CD4-positive, alpha-beta memory T cell (primary cell): ENCODE measurements at regions of chr5 and their contacts with region 1.

Region 1: GRCh38 chr5:76402886-76403765 is at the start of gene IQGAP2:
- DNase-seq: peak; percentile 91 to 96 (median 94)
- H3K4me3 ChIP-seq: peak within 1 kb of the TSS; percentile 68 to 82
- H3K4me3 Mint-ChIP-seq: peak within 1 kb of the TSS; percentile 95 to 98 (median 97)
- H3K27ac ChIP-seq: peak within 1 kb of the TSS; percentile 93
- H3K27ac Mint-ChIP-seq: peak within 1 kb of the TSS; percentile 96 to 99 (median 98)
- H3K4me1 ChIP-seq: peaks cover 56% of the 10 kb centered on the region
- H3K4me1 Mint-ChIP-seq: peaks cover 45 to 72% (median 54%) of the 10 kb centered on the region in 4 donors
- H3K27me3 ChIP-seq: no peaks in the 10 kb centered on the region
- H3K27me3 Mint-ChIP-seq: no peaks in the 10 kb centered on the region
- total RNA-seq, gene IQGAP2: 125 to 126 TPM

Region 2: GRCh38 chr5:75511435-75512384 is 891.4 kb before region 1 on chr5 and contains the starts of genes CERT1 and POLK:
- CTCF ChIA-PET with region 1: no interaction called
- POLR2A ChIA-PET with region 1: interaction called, 3 read pairs
- intact Hi-C with region 1: loop called (anchors 2 kb)
- DNase-seq: peak; percentile 92 to 97 (median 94)
- H3K4me3 ChIP-seq: peak within 1 kb of the TSS; percentile 54 to 81
- H3K4me3 Mint-ChIP-seq: peak within 1 kb of the TSS; percentile 90 to 97 (median 96)
- H3K27ac ChIP-seq: peak within 1 kb of the TSS; percentile 76
- H3K27ac Mint-ChIP-seq: peak within 1 kb of the TSS; percentile 94 to 98 (median 96)
- H3K4me1 ChIP-seq: peaks cover 44% of the 10 kb centered on the region
- H3K4me1 Mint-ChIP-seq: peaks cover 39 to 65% (median 49%) of the 10 kb centered on the region in 4 donors
- H3K27me3 ChIP-seq: no peaks in the 10 kb centered on the region
- H3K27me3 Mint-ChIP-seq: no peaks in the 10 kb centered on the region
- total RNA-seq, gene CERT1: 43.8 to 49.7 TPM
- total RNA-seq, gene POLK: 30.0 to 30.4 TPM

Region 3: DNA sequence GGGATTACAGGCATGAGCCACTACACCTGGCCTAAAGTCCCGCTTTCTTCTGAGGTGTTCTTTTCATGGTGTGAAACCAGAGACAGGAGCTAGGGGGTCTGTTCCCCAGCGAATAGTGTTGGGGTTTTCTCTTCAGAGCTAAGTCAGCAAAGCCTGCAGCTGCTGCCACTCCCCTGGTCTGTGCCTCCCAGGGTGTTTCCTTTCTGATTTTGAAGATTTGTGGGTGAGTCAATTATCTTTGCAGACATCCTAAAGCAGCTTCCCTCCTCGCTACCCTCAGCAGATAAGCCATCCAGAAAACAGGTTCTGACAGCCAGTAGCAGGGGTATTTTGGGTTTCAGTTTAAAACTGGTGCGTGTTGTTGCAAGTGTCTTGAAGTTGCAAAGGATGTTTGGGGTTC is 72.0 kb before region 1 on chr5:
- CTCF ChIA-PET with region 1: interaction called, 31 read pairs
- POLR2A ChIA-PET with region 1: interaction called, 95 read pairs
- intact Hi-C with region 1: loop called (anchors 1 kb)
- DNase-seq: peak; percentile 40 to 67 (median 50)
- H3K4me3 ChIP-seq: no peak overlapping the region
- H3K4me3 Mint-ChIP-seq: peak overlapping the region; percentile 13 to 86 (median 76)
- H3K27ac ChIP-seq: peak overlapping the region; percentile 49
- H3K27ac Mint-ChIP-seq: peak overlapping the region; percentile 87 to 96 (median 93)
- H3K4me1 ChIP-seq: peaks cover 74% of the 10 kb centered on the region
- H3K4me1 Mint-ChIP-seq: peaks cover 62 to 81% (median 71%) of the 10 kb centered on the region in 4 donors
- H3K27me3 ChIP-seq: no peaks in the 10 kb centered on the region
- H3K27me3 Mint-ChIP-seq: no peaks in the 10 kb centered on the region

Region 4: DNA sequence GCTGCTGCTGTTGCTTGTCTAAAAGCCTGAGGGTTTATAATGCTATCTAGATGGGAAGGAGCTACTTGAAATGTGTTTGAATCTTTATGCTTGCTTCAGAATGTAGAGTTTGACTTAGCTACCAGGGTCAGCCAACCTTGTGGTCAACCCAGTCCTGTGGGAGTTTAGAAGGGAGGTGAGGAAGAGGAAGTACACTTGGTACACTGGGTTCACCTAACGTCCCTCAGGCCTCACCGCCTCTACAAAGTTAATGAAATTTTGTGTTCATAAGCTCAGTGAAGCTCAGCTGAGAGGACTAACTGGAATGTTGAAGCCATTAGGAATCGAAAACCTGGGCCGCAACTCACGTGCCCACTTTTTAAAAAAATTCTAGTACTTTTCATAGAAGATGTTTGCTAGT is 10.6 kb after region 1 on chr5:
- CTCF ChIA-PET with region 1: interaction called, 34 read pairs
- POLR2A ChIA-PET with region 1: interaction called, 19 read pairs
- intact Hi-C with region 1: no loop called
- DNase-seq: no peak
- H3K4me3 ChIP-seq: no peak overlapping the region
- H3K4me3 Mint-ChIP-seq: peak overlapping the region in 1 of 8 donors; percentile 27
- H3K27ac ChIP-seq: no peak overlapping the region
- H3K27ac Mint-ChIP-seq: peak overlapping the region in 5 of 7 donors; percentile 20 to 77 (median 34)
- H3K4me1 ChIP-seq: peaks cover 60% of the 10 kb centered on the region
- H3K4me1 Mint-ChIP-seq: peaks cover 58 to 89% (median 73%) of the 10 kb centered on the region in 4 donors
- H3K27me3 ChIP-seq: no peaks in the 10 kb centered on the region
- H3K27me3 Mint-ChIP-seq: no peaks in the 10 kb centered on the region

Region 5: DNA sequence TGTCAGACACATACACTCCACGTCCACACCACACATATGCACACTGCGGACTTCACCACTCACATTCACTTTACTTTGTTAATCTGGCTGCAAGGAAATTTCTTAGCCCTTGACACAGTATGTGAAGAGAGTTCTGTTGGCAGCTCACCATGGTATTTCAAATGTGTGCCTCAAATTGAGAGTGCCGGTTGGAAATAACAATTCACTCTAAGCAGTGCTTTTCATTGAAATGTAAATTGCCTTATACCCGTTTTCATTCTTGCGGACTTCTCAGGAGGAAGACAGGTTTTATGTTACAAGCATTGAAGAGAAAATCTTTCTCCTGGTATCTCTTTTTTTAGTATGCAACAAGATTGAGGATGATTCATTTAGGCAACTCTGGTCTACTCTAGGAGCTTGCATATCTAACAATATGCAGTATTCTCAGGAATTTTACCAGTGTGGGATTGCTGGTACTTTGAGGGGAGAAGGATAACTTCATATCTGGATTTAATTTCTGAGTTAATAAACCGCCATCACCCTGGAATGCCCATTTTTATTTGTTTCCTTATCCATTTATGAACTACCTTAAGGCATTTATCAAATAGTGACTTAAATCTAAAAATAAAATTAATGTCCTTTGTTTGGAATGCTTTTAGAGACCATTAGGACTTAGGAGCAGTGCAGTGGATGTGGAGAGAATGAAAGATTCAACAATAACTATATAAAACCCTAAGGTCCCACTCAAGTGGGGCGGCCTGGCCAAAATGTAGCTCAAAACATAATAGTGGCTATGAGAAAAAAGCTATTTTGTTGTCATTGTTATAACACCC is 87.0 kb after region 1 on chr5:
- CTCF ChIA-PET with region 1: interaction called, 3 read pairs
- POLR2A ChIA-PET with region 1: interaction called, 4 read pairs
- intact Hi-C with region 1: loop called (anchors 5 kb)
- DNase-seq: no peak
- H3K4me3 ChIP-seq: no peak overlapping the region
- H3K4me3 Mint-ChIP-seq: no peak overlapping the region
- H3K27ac ChIP-seq: no peak overlapping the region
- H3K27ac Mint-ChIP-seq: peak overlapping the region in 1 of 7 donors; percentile 38
- H3K4me1 ChIP-seq: peaks cover 15% of the 10 kb centered on the region
- H3K4me1 Mint-ChIP-seq: peaks cover 47 to 77% (median 63%) of the 10 kb centered on the region in 4 donors
- H3K27me3 ChIP-seq: no peaks in the 10 kb centered on the region
- H3K27me3 Mint-ChIP-seq: no peaks in the 10 kb centered on the region

Region 6: DNA sequence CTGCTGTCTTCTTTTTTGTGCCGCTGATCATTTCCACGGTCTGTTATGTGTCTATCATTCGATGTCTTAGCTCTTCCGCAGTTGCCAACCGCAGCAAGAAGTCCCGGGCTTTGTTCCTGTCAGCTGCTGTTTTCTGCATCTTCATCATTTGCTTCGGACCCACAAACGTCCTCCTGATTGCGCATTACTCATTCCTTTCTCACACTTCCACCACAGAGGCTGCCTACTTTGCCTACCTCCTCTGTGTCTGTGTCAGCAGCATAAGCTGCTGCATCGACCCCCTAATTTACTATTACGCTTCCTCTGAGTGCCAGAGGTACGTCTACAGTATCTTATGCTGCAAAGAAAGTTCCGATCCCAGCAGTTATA is 329.9 kb after region 1 on chr5:
- CTCF ChIA-PET with region 1: no interaction called
- POLR2A ChIA-PET with region 1: interaction called, 4 read pairs
- intact Hi-C with region 1: loop called (anchors 10 kb)
- DNase-seq: peak; percentile 65 to 88 (median 70)
- H3K4me3 ChIP-seq: peak overlapping the region in 1 of 2 donors; percentile 8
- H3K4me3 Mint-ChIP-seq: peak overlapping the region; percentile 44 to 80 (median 78)
- H3K27ac ChIP-seq: peak overlapping the region; percentile 65
- H3K27ac Mint-ChIP-seq: peak overlapping the region; percentile 77 to 95 (median 90)
- H3K4me1 ChIP-seq: peaks cover 48% of the 10 kb centered on the region
- H3K4me1 Mint-ChIP-seq: peaks cover 18 to 48% (median 32%) of the 10 kb centered on the region in 4 donors
- H3K27me3 ChIP-seq: no peaks in the 10 kb centered on the region
- H3K27me3 Mint-ChIP-seq: no peaks in the 10 kb centered on the region

Region 7: DNA sequence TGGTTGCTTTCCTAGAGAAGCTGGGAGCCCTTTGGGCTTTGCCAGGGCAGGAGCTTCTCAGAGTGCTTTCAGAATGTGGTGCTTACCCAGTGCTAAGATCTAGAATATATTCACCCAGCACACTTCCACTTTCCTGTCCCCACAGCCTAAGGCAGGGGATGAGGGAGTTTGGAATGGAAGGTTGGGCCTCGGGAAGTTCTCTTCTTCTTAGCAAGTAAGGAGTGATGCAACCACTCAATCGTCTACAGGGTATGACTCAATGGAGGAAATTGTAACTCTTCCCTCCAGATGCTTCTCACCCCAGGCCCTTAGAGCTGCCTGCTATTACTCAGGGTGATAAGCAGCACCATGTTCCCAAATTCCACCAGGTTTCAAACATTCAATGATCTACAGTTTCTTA is 596.3 kb after region 1 on chr5:
- CTCF ChIA-PET with region 1: no interaction called
- POLR2A ChIA-PET with region 1: no interaction called
- intact Hi-C with region 1: no loop called
- DNase-seq: no peak
- H3K4me3 ChIP-seq: no peak overlapping the region
- H3K4me3 Mint-ChIP-seq: no peak overlapping the region
- H3K27ac ChIP-seq: no peak overlapping the region
- H3K27ac Mint-ChIP-seq: no peak overlapping the region
- H3K4me1 ChIP-seq: no peaks in the 10 kb centered on the region
- H3K4me1 Mint-ChIP-seq: no peaks in the 10 kb centered on the region
- H3K27me3 ChIP-seq: no peaks in the 10 kb centered on the region
- H3K27me3 Mint-ChIP-seq: peaks cover 15 to 16% of the 10 kb centered on the region in 2 donors